Mammary epithelial cell (primary cell): ENCODE measurements at regions of chr21 and their contacts with region 1.

Region 1: DNA sequence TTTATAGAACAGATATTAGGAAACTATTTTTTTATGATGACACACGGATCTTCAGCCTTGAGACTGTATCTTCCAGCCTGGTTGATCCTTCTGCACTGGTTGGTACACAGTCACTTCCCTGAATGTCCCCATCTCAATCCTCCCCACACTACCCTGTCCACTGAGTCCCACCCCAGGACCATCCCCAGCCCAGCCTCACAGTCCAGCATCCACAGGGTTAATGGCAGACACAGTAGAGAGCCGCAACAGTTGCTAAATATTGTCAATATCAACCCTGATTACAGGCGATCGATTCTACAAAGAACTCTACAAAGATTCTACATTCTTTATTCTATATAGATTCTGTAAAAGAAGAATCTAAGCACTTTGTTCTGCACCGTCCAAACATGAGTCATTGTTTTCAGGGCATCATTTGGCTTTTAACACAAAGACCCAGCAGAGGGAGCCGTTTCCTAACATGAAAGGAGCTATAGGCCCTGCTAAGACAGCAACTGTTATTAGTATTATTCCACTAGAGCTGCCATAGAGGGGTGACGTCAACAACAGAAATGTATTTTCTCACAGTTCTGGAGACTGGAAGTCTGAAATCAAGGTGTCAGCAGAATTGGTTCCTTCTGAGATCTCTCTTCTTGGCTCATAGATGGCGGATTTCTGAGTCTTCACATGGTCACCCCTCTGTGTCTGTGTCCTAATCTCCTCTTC is 30.1 kb upstream of the IFNAR2 start:
- DNase-seq: peak; percentile 86
- H3K4me3 ChIP-seq: no peak overlapping the region
- H3K27ac ChIP-seq: no peak overlapping the region
- H3K4me1 ChIP-seq: peaks cover 21% of the 10 kb centered on the region
- H3K27me3 ChIP-seq: no peaks in the 10 kb centered on the region
- CTCF ChIP-seq: peak; percentile 67 to 79

Region 2: GRCh38 chr21:32653311-32653901 is 546.3 kb before region 1 on chr21:
- CTCF ChIA-PET with region 1: no interaction called
- dilution Hi-C with region 1: no loop called
- in situ Hi-C with region 1: no loop called
- intact Hi-C with region 1: loop called (anchors 2 kb)
- DNase-seq: peak; percentile 3
- H3K4me3 ChIP-seq: no peak overlapping the region
- H3K27ac ChIP-seq: no peak overlapping the region
- H3K4me1 ChIP-seq: no peaks in the 10 kb centered on the region
- H3K27me3 ChIP-seq: no peaks in the 10 kb centered on the region
- CTCF ChIP-seq: peak; percentile 55 to 65

Region 3: GRCh38 chr21:32994305-32994704 is 205.4 kb before region 1 on chr21:
- CTCF ChIA-PET with region 1: interaction called, 7 read pairs
- dilution Hi-C with region 1: no loop called
- in situ Hi-C with region 1: no loop called
- intact Hi-C with region 1: loop called (anchors 1 kb)
- DNase-seq: no peak
- H3K4me3 ChIP-seq: no peak overlapping the region
- H3K27ac ChIP-seq: no peak overlapping the region
- H3K4me1 ChIP-seq: peaks cover 5% of the 10 kb centered on the region
- H3K27me3 ChIP-seq: no peaks in the 10 kb centered on the region
- CTCF ChIP-seq: peak in 1 of 2 donors; percentile 62

Region 4: GRCh38 chr21:33324291-33325221 is 124.9 kb after region 1 on chr21 and contains the start of gene IFNAR1:
- CTCF ChIA-PET with region 1: interaction called, 6 read pairs
- dilution Hi-C with region 1: no loop called
- in situ Hi-C with region 1: no loop called
- intact Hi-C with region 1: loop called (anchors 2 kb)
- DNase-seq: peak; percentile 96
- H3K4me3 ChIP-seq: peak within 1 kb of the TSS; percentile 68 to 100 (median 99)
- H3K27ac ChIP-seq: peak within 1 kb of the TSS; percentile 85
- H3K4me1 ChIP-seq: peaks cover 6% of the 10 kb centered on the region
- H3K27me3 ChIP-seq: no peaks in the 10 kb centered on the region
- CTCF ChIP-seq: no peak
- total RNA-seq, gene IFNAR1: 17.2 to 26.9 TPM

Region 5: GRCh38 chr21:33374450-33375096 is 174.9 kb after region 1 on chr21:
- CTCF ChIA-PET with region 1: no interaction called
- dilution Hi-C with region 1: no loop called
- in situ Hi-C with region 1: no loop called
- intact Hi-C with region 1: loop called (anchors 1 kb)
- DNase-seq: peak; percentile 55
- H3K4me3 ChIP-seq: no peak overlapping the region
- H3K27ac ChIP-seq: no peak overlapping the region
- H3K4me1 ChIP-seq: peaks cover 27% of the 10 kb centered on the region
- H3K27me3 ChIP-seq: no peaks in the 10 kb centered on the region
- CTCF ChIP-seq: peak; percentile 59 to 72

Region 6: DNA sequence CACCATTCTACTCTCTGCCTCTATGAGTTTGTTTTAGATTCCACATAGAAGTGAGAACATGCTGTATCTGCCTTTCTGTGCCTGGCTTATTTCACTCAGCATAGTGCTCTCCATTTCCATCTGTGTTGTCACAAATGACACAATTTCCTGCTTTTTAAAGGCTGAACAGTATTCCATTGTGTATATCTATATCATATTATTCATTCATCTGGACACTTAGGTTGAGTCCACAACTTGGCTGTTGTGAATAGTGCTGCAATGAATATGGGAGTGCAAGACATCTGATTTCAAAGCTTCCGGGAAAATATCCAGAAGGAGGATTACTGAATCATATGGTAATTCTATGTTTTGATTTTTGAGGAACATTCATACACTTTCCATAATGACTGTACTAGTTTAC is 408.9 kb after region 1 on chr21:
- CTCF ChIA-PET with region 1: interaction called, 3 read pairs
- dilution Hi-C with region 1: no loop called
- in situ Hi-C with region 1: no loop called
- intact Hi-C with region 1: loop called (anchors 1 kb)
- DNase-seq: no peak
- H3K4me3 ChIP-seq: no peak overlapping the region
- H3K27ac ChIP-seq: no peak overlapping the region
- H3K4me1 ChIP-seq: no peaks in the 10 kb centered on the region
- H3K27me3 ChIP-seq: no peaks in the 10 kb centered on the region
- CTCF ChIP-seq: no peak